ENCODE measurements at regions of chr7 and their contacts with region 1.

Region 1: GRCh38 chr7:32218154-32218467 is 147.9 kb upstream of the PDE1C start:
- DNase-seq: peak in 1 of 2 donors; percentile 14
- H3K4me3 ChIP-seq: no peak overlapping the region
- CTCF ChIP-seq: no peak
- POLR2A ChIP-seq: no peak

Region 2: DNA sequence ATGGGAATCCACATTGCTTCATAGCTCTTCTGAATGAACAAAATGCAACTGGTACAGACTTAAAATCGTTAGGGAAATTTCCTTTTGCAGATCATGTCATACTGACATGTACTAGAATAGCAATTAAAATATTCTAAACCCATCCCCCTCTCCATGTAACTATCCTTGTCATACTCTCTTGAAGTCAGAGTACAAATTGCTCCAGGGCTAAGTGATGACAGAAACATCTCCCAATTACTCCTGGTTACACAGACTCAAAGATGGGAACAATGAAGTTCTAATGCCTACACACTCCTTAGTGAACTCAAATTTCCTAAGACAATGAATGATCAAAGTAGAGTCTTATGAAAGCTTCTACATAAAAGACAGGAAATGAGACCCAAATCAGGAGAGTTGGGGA is 235.1 kb before region 1 on chr7:
- intact Hi-C with region 1: no loop called
- DNase-seq: no peak
- H3K4me3 ChIP-seq: no peak overlapping the region
- CTCF ChIP-seq: no peak
- POLR2A ChIP-seq: no peak

Region 3: DNA sequence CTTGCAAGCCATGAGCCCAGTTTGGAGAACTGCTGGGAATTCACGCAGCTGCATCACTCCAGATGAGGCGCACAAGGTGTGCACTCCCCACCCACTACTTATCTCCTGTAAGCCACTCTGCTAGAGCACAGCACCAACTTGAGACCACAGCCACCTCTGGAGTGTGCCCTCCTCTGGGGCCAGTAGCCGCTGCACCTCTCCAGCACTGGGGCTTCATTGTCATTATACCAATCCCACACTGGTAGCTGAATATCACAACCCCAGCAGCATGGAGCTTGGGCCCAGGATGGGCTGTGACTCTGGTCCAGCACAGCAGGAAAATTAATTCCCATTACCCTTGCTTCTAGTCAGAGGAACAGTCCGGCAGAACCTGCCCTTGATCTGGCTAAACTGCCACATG is 146.5 kb after region 1 on chr7:
- intact Hi-C with region 1: loop called (anchors 5 kb)
- DNase-seq: no peak
- H3K4me3 ChIP-seq: no peak overlapping the region
- CTCF ChIP-seq: no peak
- POLR2A ChIP-seq: no peak